ENCODE measurements at regions of chr16 and their contacts with region 1.

Region 1: DNA sequence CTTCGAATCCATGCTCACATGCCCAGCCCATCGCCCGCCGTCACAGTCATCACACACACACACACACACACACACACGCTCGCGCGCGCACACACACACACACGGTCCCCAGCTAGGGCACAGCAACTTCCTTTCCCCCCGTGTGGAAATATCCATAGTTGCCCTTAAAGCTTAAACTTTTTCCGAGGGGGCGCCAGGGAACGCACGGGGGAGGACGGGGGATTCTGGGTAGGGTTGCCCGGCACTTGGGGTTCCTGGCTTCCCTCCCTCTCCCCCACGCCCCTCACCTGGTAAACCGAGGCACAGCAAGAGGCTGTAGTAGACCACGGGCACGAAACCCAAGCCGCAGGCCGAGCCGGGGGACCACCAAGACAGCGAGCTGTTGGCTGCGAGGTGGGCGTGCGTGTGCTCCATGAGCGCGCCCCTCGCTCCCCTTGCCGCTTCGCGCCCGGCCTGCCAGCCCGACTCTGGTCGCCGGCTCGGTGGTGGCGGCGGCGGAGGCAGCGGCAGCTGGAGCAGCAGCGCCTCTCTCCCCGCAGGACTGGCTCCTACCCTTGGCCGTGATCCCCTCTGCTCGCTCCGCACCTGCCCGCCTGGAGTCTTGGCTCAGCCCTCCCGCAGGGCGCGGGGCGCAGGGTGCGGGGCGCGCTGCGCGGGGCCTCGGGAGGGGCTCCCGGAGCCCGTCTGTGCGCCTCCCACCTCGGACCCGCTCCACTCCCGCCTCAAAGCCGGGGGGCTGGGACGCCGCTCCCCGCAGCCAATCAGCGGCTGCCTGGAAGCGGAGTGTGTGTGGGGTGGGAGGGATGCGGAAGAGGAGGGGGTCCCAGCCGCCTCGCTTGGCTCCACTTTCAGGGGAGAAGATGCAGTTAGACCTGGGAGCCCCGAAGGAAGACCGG is at the start of gene GPR139:
- DNase-seq: no peak
- ATAC-seq: no peak
- H3K4me3 ChIP-seq: peak within 1 kb of the TSS in 1 of 4 donors; percentile 20
- H3K27ac ChIP-seq: no peak within 1 kb of the TSS
- H3K4me1 ChIP-seq: no peaks in the 10 kb centered on the region
- H3K27me3 ChIP-seq: peaks cover 0 to 4% (median 0%) of the 10 kb centered on the region in 4 donors
- CTCF ChIP-seq: no peak
- total RNA-seq, gene GPR139: not detected

Region 2: DNA sequence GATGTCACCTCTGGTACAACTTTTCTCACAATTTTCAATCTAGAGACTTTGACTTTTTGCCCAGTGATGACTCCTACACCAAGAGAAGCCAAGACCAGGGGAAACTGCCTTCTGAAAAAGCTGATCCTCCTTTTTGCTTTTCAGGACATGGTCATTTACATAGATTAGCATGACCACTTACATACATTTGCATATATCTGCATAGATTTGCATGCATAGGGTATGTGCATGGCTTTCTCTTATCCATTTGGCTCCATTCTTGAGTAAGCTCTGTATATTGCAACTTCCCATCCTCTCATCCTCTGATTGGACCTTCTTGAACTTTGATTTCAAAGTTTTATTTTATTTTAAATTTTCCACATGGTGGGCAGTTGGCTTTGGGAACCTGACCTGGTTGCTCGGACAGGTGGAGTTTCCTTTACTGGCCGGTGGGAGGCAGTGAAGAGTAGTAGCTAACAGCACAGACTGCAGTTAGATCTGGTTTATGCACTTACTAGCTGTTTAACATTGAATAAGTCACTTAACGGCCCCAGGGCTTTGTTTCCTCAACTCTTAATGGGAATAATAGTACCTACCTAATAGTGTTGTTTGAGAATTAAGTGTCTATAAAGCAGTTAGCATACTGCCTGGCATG is 92.7 kb before region 1 on chr16:
- intact Hi-C with region 1: no loop called
- DNase-seq: peak in 1 of 6 donors; percentile 14
- ATAC-seq: peak in 2 of 4 donors; percentile 52 to 72
- H3K4me3 ChIP-seq: no peak overlapping the region
- H3K27ac ChIP-seq: no peak overlapping the region
- H3K4me1 ChIP-seq: no peaks in the 10 kb centered on the region
- H3K27me3 ChIP-seq: no peaks in the 10 kb centered on the region
- CTCF ChIP-seq: peak; percentile 13 to 34 (median 29)

Region 3: DNA sequence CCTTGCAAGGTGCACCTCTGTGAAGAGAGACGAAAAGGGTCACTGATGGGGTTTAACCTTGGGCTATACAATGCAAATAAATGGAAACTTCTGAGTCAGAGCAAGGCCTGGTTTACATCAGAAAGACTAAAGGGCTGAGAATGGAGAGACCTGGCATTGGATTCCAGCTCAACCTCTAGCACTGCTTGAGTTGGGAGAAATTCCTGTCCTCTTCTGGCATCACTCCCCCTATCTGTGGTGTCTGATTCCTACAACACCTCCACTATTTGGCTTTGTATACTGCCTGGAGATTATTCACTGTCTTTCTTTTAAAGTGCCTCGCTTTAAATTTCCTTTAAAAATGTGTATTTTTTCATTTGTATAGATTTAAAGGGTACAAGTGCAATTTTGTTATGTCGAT is 68.5 kb before region 1 on chr16:
- intact Hi-C with region 1: no loop called
- DNase-seq: no peak
- ATAC-seq: no peak
- H3K4me3 ChIP-seq: no peak overlapping the region
- H3K27ac ChIP-seq: no peak overlapping the region
- H3K4me1 ChIP-seq: peaks cover 0 to 3% (median 0%) of the 10 kb centered on the region in 3 donors
- H3K27me3 ChIP-seq: no peaks in the 10 kb centered on the region
- CTCF ChIP-seq: no peak

Region 4: GRCh38 chr16:20122011-20122410 is 48.6 kb after region 1 on chr16:
- intact Hi-C with region 1: no loop called
- DNase-seq: no peak
- ATAC-seq: no peak
- H3K4me3 ChIP-seq: no peak overlapping the region
- H3K27ac ChIP-seq: no peak overlapping the region
- H3K4me1 ChIP-seq: no peaks in the 10 kb centered on the region
- H3K27me3 ChIP-seq: no peaks in the 10 kb centered on the region
- CTCF ChIP-seq: no peak

Region 5: DNA sequence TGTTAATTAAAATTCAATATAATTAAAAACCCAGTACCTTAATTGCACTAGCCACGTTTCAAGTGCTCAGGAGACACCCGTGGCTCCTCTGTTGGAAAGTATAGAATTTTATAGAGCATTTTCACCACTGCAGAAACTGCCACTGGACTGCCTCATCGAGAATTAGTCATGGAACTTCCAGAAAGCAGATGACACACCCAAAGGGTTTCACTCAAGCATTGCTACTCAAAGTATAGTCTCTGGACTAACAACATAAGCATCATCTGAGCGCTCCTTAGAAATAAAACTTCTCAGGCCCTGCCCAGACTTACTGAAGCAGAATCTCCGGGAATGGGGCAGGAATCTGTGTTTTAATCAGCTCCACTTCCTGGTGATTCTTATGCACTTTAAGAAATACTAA is 63.7 kb after region 1 on chr16:
- intact Hi-C with region 1: loop called in 1 of 3 experiments (anchors 10 kb)
- DNase-seq: no peak
- ATAC-seq: no peak
- H3K4me3 ChIP-seq: no peak overlapping the region
- H3K27ac ChIP-seq: no peak overlapping the region
- H3K4me1 ChIP-seq: no peaks in the 10 kb centered on the region
- H3K27me3 ChIP-seq: no peaks in the 10 kb centered on the region
- CTCF ChIP-seq: no peak